K562 (cell line): ENCODE measurements at regions of chr10 and their contacts with region 1.

Region 1: GRCh38 chr10:93376372-93377293 is 105.5 kb downstream of the MYOF start:
- DNase-seq: peak; percentile 51 to 55 (median 54)
- ATAC-seq: peak; percentile 82
- H3K4me3 ChIP-seq: no peak overlapping the region
- H3K27ac ChIP-seq: no peak overlapping the region
- H3K4me1 ChIP-seq: no peaks in the 10 kb centered on the region
- H3K27me3 ChIP-seq: peaks cover 0 to 12% of the 10 kb centered on the region in 2 experiments; a peak in 1 of 5 replicates
- CTCF ChIP-seq: peak; percentile 69 to 78 (median 71)
- EP300 ChIP-seq: no peak
- POLR2A ChIP-seq: no peak
- RAD21 ChIP-seq: peak; percentile 90 to 94

Region 2: DNA sequence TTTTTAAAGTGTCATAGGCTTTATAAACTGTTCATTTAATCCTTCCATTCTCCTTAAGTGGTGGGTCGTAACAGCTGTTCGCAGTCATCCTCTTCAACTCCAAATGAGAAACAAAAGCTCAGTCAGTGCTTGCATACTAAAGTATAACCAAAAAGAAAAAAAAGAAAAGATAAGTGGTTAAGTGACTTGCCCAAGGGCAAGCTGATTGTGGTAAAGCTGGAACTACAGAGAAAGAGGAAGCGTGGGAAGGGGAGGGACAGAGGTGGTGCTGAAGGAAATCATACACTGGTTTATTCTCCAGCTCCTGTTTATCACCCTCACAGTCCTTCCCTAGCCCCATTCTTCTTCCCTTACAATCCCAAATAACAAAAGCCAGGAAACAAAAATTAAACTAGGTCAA is 832.3 kb before region 1 on chr10:
- CTCF ChIA-PET with region 1: no interaction called
- POLR2A ChIA-PET with region 1: no interaction called
- in situ Hi-C with region 1: no loop called
- intact Hi-C with region 1: no loop called
- DNase-seq: peak in 1 of 4 experiments; percentile 29
- ATAC-seq: peak; percentile 76
- H3K4me3 ChIP-seq: no peak overlapping the region
- H3K27ac ChIP-seq: no peak overlapping the region
- H3K4me1 ChIP-seq: peaks cover 0 to 2% of the 10 kb centered on the region in 2 experiments; a peak in 3 of 5 replicates
- H3K27me3 ChIP-seq: no peaks in the 10 kb centered on the region
- CTCF ChIP-seq: no peak
- EP300 ChIP-seq: no peak
- POLR2A ChIP-seq: no peak
- RAD21 ChIP-seq: no peak

Region 3: DNA sequence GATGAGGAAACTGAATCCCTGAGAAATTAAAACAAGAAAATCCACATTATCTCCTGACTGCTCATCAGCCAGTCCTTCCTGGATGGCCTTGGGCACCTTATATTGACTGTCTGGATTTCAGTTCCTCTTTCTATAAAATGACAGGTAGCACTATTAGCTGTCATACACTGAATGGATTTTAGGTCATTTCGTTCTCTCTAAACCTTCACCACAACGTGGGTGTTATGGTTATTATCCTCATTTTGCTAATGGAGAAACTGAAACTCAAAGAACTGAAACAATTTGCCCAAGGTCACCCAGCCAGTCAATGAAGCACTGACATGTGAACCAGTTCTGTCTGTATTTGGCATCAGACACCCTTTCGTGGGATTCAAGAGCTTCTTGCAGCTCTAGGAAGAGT is 109.1 kb before region 1 on chr10:
- CTCF ChIA-PET with region 1: no interaction called
- POLR2A ChIA-PET with region 1: no interaction called
- in situ Hi-C with region 1: no loop called
- intact Hi-C with region 1: no loop called
- DNase-seq: no peak
- ATAC-seq: no peak
- H3K4me3 ChIP-seq: no peak overlapping the region
- H3K27ac ChIP-seq: no peak overlapping the region
- H3K4me1 ChIP-seq: no peaks in the 10 kb centered on the region
- H3K27me3 ChIP-seq: peaks cover 0 to 10% of the 10 kb centered on the region in 2 experiments; a peak in 1 of 5 replicates
- CTCF ChIP-seq: no peak
- EP300 ChIP-seq: no peak
- POLR2A ChIP-seq: no peak
- RAD21 ChIP-seq: no peak

Region 4: GRCh38 chr10:93309062-93309461 is 67.6 kb before region 1 on chr10:
- CTCF ChIA-PET with region 1: no interaction called
- POLR2A ChIA-PET with region 1: no interaction called
- in situ Hi-C with region 1: no loop called
- intact Hi-C with region 1: no loop called
- DNase-seq: no peak
- ATAC-seq: no peak
- H3K4me3 ChIP-seq: no peak overlapping the region
- H3K27ac ChIP-seq: no peak overlapping the region
- H3K4me1 ChIP-seq: no peaks in the 10 kb centered on the region
- H3K27me3 ChIP-seq: peaks cover 0 to 9% of the 10 kb centered on the region in 2 experiments; a peak in 3 of 5 replicates
- CTCF ChIP-seq: no peak
- EP300 ChIP-seq: no peak
- POLR2A ChIP-seq: no peak
- RAD21 ChIP-seq: no peak

Region 5: GRCh38 chr10:93413252-93413689 is 36.6 kb after region 1 on chr10:
- CTCF ChIA-PET with region 1: no interaction called
- POLR2A ChIA-PET with region 1: no interaction called
- in situ Hi-C with region 1: no loop called
- intact Hi-C with region 1: no loop called
- DNase-seq: no peak
- ATAC-seq: no peak
- H3K4me3 ChIP-seq: no peak overlapping the region
- H3K27ac ChIP-seq: no peak overlapping the region
- H3K4me1 ChIP-seq: no peaks in the 10 kb centered on the region
- H3K27me3 ChIP-seq: peaks cover 11 to 26% of the 10 kb centered on the region in 2 experiments
- CTCF ChIP-seq: no peak
- EP300 ChIP-seq: no peak
- POLR2A ChIP-seq: no peak
- RAD21 ChIP-seq: no peak

Region 6: GRCh38 chr10:93482145-93482834 is 105.7 kb after region 1 on chr10 and contains the start of gene MYOF:
- CTCF ChIA-PET with region 1: interaction called, 50 read pairs
- POLR2A ChIA-PET with region 1: interaction called, 3 read pairs
- in situ Hi-C with region 1: loop called (anchors 5 kb)
- intact Hi-C with region 1: loop called (anchors 1 kb)
- DNase-seq: peak; percentile 49 to 61 (median 53)
- ATAC-seq: peak; percentile 75
- H3K4me3 ChIP-seq: peak within 1 kb of the TSS; percentile 12; the same call in 1 of the 2 replicates
- H3K27ac ChIP-seq: no peak within 1 kb of the TSS
- H3K4me1 ChIP-seq: no peaks in the 10 kb centered on the region
- H3K27me3 ChIP-seq: peaks cover 0 to 10% of the 10 kb centered on the region in 2 experiments; a peak in 3 of 5 replicates
- CTCF ChIP-seq: peak in 2 of 3 experiments; percentile 53 to 69; a peak in 3 of 6 replicates
- EP300 ChIP-seq: no peak
- POLR2A ChIP-seq: no peak
- RAD21 ChIP-seq: peak; percentile 72
- polyA plus RNA-seq, gene MYOF: not detected

Region 7: GRCh38 chr10:93515071-93516005 is 138.7 kb after region 1 on chr10:
- CTCF ChIA-PET with region 1: interaction called, 25 read pairs
- POLR2A ChIA-PET with region 1: no interaction called
- in situ Hi-C with region 1: no loop called
- intact Hi-C with region 1: loop called (anchors 1 kb)
- DNase-seq: no peak
- ATAC-seq: no peak
- H3K4me3 ChIP-seq: no peak overlapping the region
- H3K27ac ChIP-seq: no peak overlapping the region
- H3K4me1 ChIP-seq: no peaks in the 10 kb centered on the region
- H3K27me3 ChIP-seq: no peaks in the 10 kb centered on the region
- CTCF ChIP-seq: no peak
- EP300 ChIP-seq: no peak
- POLR2A ChIP-seq: no peak
- RAD21 ChIP-seq: no peak

Region 8: GRCh38 chr10:93672022-93672678 is 295.5 kb after region 1 on chr10:
- CTCF ChIA-PET with region 1: no interaction called
- POLR2A ChIA-PET with region 1: no interaction called
- in situ Hi-C with region 1: no loop called
- intact Hi-C with region 1: loop called (anchors 10 kb)
- DNase-seq: no peak
- ATAC-seq: no peak
- H3K4me3 ChIP-seq: no peak overlapping the region
- H3K27ac ChIP-seq: no peak overlapping the region
- H3K4me1 ChIP-seq: no peaks in the 10 kb centered on the region
- H3K27me3 ChIP-seq: no peaks in the 10 kb centered on the region
- CTCF ChIP-seq: no peak
- EP300 ChIP-seq: no peak
- POLR2A ChIP-seq: no peak
- RAD21 ChIP-seq: no peak